ENCODE measurements at regions of chr10 and their contacts with region 1.

Region 1: GRCh38 chr10:51422311-51423120 is 276.9 kb downstream of the CSTF2T start:
- DNase-seq: peak; percentile 37
- H3K4me3 Mint-ChIP-seq: no peak overlapping the region
- H3K27ac Mint-ChIP-seq: no peak overlapping the region
- H3K4me1 Mint-ChIP-seq: peaks cover 2% of the 10 kb centered on the region
- H3K27me3 Mint-ChIP-seq: peaks cover 2% of the 10 kb centered on the region

Region 2: DNA sequence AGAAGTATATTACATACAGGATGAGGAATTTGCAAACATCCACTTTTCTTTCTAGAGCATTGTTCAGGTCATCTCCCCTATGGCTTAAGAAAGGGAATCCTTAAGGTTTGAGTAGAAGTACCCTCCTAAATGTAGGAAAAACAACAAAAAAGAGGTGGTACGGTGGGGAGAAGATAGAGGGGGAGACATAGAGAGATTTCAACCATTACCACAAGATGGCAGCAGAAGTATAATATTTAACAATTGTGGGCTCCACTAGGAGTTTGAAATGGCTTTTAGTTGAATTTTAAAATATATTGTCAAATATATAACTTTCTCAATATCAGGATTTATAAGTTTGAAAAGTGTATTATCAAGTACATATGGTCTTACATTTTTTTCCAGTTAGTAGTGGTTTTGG is 420.9 kb before region 1 on chr10:
- CTCF ChIA-PET with region 1: no interaction called
- POLR2A ChIA-PET with region 1: no interaction called
- intact Hi-C with region 1: loop called (anchors 5 kb)
- DNase-seq: no peak
- H3K4me3 Mint-ChIP-seq: no peak overlapping the region
- H3K27ac Mint-ChIP-seq: no peak overlapping the region
- H3K4me1 Mint-ChIP-seq: no peaks in the 10 kb centered on the region
- H3K27me3 Mint-ChIP-seq: peaks cover 4% of the 10 kb centered on the region

Region 3: DNA sequence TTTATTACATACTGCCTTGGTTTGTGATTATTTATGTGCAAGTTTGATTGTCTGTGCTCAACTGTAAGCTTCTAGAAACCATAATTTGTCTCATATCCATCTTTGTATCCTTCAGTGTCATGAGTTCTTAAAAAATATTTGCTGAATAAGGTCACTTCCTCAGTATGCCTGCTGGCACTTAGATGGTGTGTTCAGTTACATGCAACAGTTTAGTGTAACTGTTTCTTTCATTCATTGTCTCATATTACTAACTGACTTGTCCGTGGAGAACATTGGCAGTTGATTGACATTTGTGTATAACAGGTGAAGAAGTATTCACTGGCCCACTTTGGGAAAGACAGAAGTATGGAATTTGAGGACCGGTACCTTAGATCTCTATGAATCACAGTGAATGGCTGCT is 111.3 kb before region 1 on chr10:
- CTCF ChIA-PET with region 1: no interaction called
- POLR2A ChIA-PET with region 1: no interaction called
- intact Hi-C with region 1: no loop called
- DNase-seq: no peak
- H3K4me3 Mint-ChIP-seq: no peak overlapping the region
- H3K27ac Mint-ChIP-seq: no peak overlapping the region
- H3K4me1 Mint-ChIP-seq: no peaks in the 10 kb centered on the region
- H3K27me3 Mint-ChIP-seq: no peaks in the 10 kb centered on the region

Region 4: DNA sequence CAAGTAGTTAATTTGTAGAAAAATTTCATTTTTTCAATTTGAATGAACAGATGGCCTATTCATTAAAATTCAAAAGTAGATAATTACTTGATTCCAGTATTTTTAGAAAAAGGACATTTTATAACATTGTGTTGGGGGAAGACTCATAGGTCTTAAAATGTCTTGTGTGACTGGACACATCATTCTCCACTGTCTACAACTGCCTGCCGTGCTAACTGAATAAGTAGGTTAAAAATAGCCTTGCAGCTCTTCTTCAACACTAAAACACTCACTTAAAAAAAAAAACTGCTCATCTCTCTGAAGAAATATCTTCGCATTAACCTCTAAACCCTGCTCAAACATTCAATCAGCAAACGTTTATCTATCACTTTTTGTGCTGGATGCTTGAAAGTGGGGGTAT is 23.1 kb after region 1 on chr10:
- CTCF ChIA-PET with region 1: no interaction called
- POLR2A ChIA-PET with region 1: no interaction called
- intact Hi-C with region 1: no loop called
- DNase-seq: no peak
- H3K4me3 Mint-ChIP-seq: no peak overlapping the region
- H3K27ac Mint-ChIP-seq: no peak overlapping the region
- H3K4me1 Mint-ChIP-seq: no peaks in the 10 kb centered on the region
- H3K27me3 Mint-ChIP-seq: peaks cover 2% of the 10 kb centered on the region